CD4-positive, alpha-beta T cell (primary cell): ENCODE measurements at regions of chr5 and their contacts with region 1.

Region 1: GRCh38 chr5:61280205-61280604 is 51.9 kb upstream of the ZSWIM6 start:
- DNase-seq: peak in 3 of 14 experiments; percentile 11 to 37 (median 24)
- ATAC-seq: peak; percentile 47
- H3K4me3 ChIP-seq: no peak overlapping the region
- H3K4me3 Mint-ChIP-seq: no peak overlapping the region
- H3K27ac ChIP-seq: no peak overlapping the region
- H3K27ac Mint-ChIP-seq: no peak overlapping the region
- H3K4me1 ChIP-seq: peaks cover 30% of the 10 kb centered on the region
- H3K4me1 Mint-ChIP-seq: peaks cover 18% of the 10 kb centered on the region
- H3K27me3 ChIP-seq: no peaks in the 10 kb centered on the region
- H3K27me3 Mint-ChIP-seq: no peaks in the 10 kb centered on the region
- CTCF ChIP-seq: no peak

Region 2: DNA sequence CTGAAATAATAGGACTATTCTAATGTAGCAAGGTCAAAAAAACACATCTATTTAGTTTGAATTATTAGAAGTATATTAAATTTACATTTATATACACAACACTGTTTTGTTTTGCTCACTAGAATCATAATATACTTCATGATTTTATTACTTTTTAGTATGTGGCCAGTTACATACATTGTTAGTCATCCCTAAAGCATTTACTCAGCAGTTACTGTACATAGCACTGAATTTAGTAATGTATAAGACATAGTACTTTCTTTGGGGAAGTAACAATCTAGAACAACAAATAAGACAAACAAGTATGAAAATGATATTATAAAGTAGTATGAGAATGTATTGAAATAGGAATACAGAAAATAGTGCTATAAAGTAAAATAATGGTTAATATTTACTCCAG is 363.6 kb before region 1 on chr5:
- CTCF ChIA-PET with region 1: no interaction called
- POLR2A ChIA-PET with region 1: no interaction called
- intact Hi-C with region 1: no loop called
- DNase-seq: no peak
- ATAC-seq: no peak
- H3K4me3 ChIP-seq: no peak overlapping the region
- H3K4me3 Mint-ChIP-seq: no peak overlapping the region
- H3K27ac ChIP-seq: no peak overlapping the region
- H3K27ac Mint-ChIP-seq: no peak overlapping the region
- H3K4me1 ChIP-seq: no peaks in the 10 kb centered on the region
- H3K4me1 Mint-ChIP-seq: no peaks in the 10 kb centered on the region
- H3K27me3 ChIP-seq: no peaks in the 10 kb centered on the region
- H3K27me3 Mint-ChIP-seq: no peaks in the 10 kb centered on the region
- CTCF ChIP-seq: no peak

Region 3: GRCh38 chr5:61304611-61305321 is 24.6 kb after region 1 on chr5:
- CTCF ChIA-PET with region 1: no interaction called
- POLR2A ChIA-PET with region 1: no interaction called
- intact Hi-C with region 1: no loop called
- DNase-seq: peak in 3 of 14 experiments; percentile 6 to 58 (median 31)
- ATAC-seq: peak; percentile 68
- H3K4me3 ChIP-seq: no peak overlapping the region
- H3K4me3 Mint-ChIP-seq: no peak overlapping the region
- H3K27ac ChIP-seq: no peak overlapping the region
- H3K27ac Mint-ChIP-seq: no peak overlapping the region
- H3K4me1 ChIP-seq: no peaks in the 10 kb centered on the region
- H3K4me1 Mint-ChIP-seq: no peaks in the 10 kb centered on the region
- H3K27me3 ChIP-seq: peaks cover 0 to 8% of the 10 kb centered on the region in 2 experiments
- H3K27me3 Mint-ChIP-seq: peaks cover 16% of the 10 kb centered on the region
- CTCF ChIP-seq: no peak

Region 4: GRCh38 chr5:61408476-61409168 is 128.4 kb after region 1 on chr5:
- CTCF ChIA-PET with region 1: no interaction called
- POLR2A ChIA-PET with region 1: no interaction called
- intact Hi-C with region 1: loop called in 1 of 2 experiments (anchors 5 kb)
- DNase-seq: peak; percentile 90 to 100 (median 98)
- ATAC-seq: peak; percentile 95
- H3K4me3 ChIP-seq: peak overlapping the region; percentile 42
- H3K4me3 Mint-ChIP-seq: peak overlapping the region; percentile 86
- H3K27ac ChIP-seq: peak overlapping the region in 1 of 2 donors; percentile 37
- H3K27ac Mint-ChIP-seq: peak overlapping the region; percentile 71
- H3K4me1 ChIP-seq: no peaks in the 10 kb centered on the region
- H3K4me1 Mint-ChIP-seq: peaks cover 25% of the 10 kb centered on the region
- H3K27me3 ChIP-seq: no peaks in the 10 kb centered on the region
- H3K27me3 Mint-ChIP-seq: no peaks in the 10 kb centered on the region
- CTCF ChIP-seq: no peak

Region 5: GRCh38 chr5:61551637-61552313 is 271.6 kb after region 1 on chr5:
- CTCF ChIA-PET with region 1: no interaction called
- POLR2A ChIA-PET with region 1: no interaction called
- intact Hi-C with region 1: no loop called
- DNase-seq: no peak
- ATAC-seq: no peak
- H3K4me3 ChIP-seq: no peak overlapping the region
- H3K4me3 Mint-ChIP-seq: no peak overlapping the region
- H3K27ac ChIP-seq: no peak overlapping the region
- H3K27ac Mint-ChIP-seq: no peak overlapping the region
- H3K4me1 ChIP-seq: no peaks in the 10 kb centered on the region
- H3K4me1 Mint-ChIP-seq: no peaks in the 10 kb centered on the region
- H3K27me3 ChIP-seq: no peaks in the 10 kb centered on the region
- H3K27me3 Mint-ChIP-seq: no peaks in the 10 kb centered on the region
- CTCF ChIP-seq: no peak